ENCODE measurements at regions of chr12 and their contacts with region 1.

Region 1: DNA sequence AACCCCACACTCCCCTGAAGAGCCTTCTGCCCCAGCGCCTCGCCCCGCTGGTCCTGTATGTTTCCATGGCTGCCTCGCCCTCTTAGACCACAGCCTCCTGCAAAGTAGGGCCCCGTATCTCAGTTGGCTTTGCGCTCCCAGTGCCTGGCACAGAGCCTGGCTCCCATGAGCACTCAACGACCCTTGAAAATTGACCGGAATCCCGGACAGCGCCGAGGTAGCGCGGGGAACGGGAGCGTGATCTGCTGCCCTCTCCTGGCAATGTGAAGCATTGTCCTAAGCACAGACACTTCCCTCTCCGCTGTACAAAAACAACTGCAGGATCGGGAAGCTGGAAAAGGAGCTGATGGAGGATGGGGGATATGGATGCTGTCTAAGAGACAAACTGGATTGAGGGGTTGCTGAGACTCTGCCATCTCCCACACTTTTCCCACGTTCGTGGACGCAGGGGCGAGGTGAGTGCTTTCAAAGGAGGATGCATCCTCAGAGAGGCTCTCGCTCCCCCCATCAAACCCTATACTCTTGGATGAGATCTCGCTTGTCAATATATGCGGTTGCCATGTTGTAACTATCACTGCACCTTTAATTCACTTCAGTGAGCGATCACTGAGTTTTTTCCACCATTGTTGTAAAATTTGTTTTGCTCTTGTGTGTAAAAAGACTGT is 10.7 kb upstream of the FKBP4 start:
- DNase-seq: no peak
- H3K4me3 ChIP-seq: peak overlapping the region; percentile 30
- CTCF ChIP-seq: peak; percentile 90

Region 2: GRCh38 chr12:2722806-2723205 is 61.3 kb before region 1 on chr12:
- CTCF ChIA-PET with region 1: interaction called, 10 read pairs
- POLR2A ChIA-PET with region 1: no interaction called
- DNase-seq: no peak
- H3K4me3 ChIP-seq: no peak overlapping the region
- CTCF ChIP-seq: no peak

Region 3: DNA sequence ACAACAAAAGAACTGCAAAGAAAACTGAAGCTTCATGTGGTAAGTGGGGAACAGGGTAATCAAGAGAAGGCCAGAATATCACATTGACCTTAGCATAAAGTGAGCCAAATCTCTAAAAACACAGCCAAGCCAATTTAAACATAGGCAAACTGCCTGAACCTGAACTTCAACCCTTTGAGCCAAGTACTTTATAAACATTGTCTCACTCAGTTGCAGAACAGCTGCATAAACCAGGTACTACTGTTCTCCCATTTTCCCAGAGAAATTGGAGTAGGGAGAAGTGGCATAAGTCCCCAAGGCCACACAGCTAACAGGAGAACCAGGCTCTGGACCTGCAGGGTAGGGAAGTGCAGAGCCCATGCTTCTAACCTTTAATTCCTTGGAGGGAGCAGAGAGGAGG is 19.7 kb before region 1 on chr12:
- CTCF ChIA-PET with region 1: interaction called, 11 read pairs
- POLR2A ChIA-PET with region 1: no interaction called
- DNase-seq: no peak
- H3K4me3 ChIP-seq: no peak overlapping the region
- CTCF ChIP-seq: no peak

Region 4: GRCh38 chr12:2794736-2795289 is 10.7 kb after region 1 on chr12 and contains the start of gene FKBP4:
- CTCF ChIA-PET with region 1: interaction called, 27 read pairs
- POLR2A ChIA-PET with region 1: no interaction called
- DNase-seq: no peak
- H3K4me3 ChIP-seq: peak within 1 kb of the TSS; percentile 87
- CTCF ChIP-seq: no peak